ENCODE measurements at regions of chr6 and their contacts with region 1.

Region 1: DNA sequence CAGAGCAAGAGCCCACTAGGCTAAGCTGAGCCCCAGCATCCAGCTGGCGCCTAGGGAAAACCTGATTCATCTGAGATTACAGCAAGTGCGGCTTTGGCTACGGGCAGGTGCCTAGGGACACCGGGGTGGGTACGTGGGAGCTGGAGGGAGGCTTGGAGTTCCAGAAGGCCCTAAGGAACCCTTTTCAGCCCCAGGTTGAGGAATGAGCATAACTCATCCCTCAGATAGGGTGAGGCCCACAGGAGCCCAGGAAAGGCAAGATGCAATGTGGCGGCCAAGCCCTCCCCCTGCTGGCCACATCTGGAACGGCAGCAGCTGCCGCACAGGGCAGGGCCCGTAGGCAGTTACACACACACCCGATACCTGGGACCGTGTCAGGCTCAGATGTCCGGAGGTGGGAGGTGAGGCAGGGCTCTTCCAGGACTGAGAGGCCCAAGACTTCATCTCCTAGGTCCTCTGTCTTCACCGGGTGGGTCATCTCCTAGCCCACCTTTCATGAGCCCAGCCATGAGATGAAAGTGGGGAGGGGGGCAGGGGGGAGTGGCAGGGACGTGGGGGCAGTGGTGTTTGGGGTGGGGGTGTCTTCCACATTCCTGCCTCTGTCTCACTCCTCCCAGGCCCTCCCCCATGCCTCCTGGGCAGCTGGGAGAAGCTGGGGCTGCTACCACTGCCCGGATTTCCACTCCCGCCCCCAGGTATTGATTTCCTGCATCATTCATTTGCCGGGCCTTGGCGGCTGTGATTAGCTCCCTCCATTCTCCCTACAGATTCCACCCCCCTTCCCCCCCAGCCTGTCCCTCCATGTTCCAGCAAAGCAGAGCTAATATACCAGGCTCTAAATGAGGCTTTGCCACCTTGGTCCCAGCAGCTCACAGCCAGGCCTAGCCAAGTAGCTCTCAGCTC is 5.5 kb downstream of the MDGA1 start:
- DNase-seq: peak; percentile 74
- ATAC-seq: peak; percentile 88
- H3K4me3 Mint-ChIP-seq: no peak overlapping the region
- H3K27ac Mint-ChIP-seq: no peak overlapping the region
- H3K4me1 Mint-ChIP-seq: peaks cover 21% of the 10 kb centered on the region
- H3K27me3 Mint-ChIP-seq: peaks cover 18% of the 10 kb centered on the region
- CTCF ChIP-seq: peak; percentile 69

Region 2: DNA sequence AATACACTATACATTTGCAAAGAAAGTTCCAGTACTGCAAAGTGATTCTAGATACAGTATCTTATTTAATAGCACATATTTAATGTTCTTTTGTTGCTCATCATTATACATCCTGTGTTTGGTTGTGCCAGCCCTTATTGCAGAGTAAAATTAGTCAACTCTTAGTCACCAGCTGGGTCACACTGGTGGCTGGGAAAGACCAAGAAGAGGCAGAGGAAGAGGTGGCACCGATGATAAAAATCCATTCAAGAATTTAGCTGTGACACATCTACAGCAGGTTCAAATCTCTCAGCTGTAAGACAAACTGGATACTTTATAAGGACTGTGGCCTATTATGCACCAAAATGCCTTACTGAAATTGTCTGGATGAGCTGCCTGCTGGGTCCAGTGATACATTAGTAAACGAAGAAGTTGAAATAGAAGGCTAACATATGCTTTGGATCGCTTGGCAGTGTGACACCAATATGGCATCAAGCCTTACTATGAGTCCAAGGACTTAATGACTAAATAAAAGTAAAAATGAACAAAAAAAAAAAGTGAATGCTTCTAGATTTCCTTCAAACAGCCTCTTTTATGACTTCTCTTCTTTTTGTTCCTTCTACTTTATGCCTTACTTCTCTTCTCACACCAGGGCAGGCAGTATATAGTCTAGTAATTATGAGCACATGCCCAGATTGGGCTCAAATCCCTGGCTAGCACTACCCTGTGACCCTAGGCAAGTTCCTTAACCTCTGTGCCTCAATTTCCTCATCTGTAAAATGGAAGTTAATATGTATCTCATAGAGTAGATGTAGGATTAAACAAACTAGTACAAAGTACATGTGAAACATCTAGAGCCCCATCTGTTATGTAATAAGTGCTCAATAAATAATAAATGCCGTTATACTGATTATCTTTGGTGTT is 367.8 kb before region 1 on chr6:
- CTCF ChIA-PET with region 1: interaction called, 16 read pairs
- POLR2A ChIA-PET with region 1: no interaction called
- intact Hi-C with region 1: loop called (anchors 1 kb)
- DNase-seq: no peak
- ATAC-seq: no peak
- H3K4me3 Mint-ChIP-seq: no peak overlapping the region
- H3K27ac Mint-ChIP-seq: no peak overlapping the region
- H3K4me1 Mint-ChIP-seq: peaks cover 2% of the 10 kb centered on the region
- H3K27me3 Mint-ChIP-seq: no peaks in the 10 kb centered on the region
- CTCF ChIP-seq: no peak

Region 3: DNA sequence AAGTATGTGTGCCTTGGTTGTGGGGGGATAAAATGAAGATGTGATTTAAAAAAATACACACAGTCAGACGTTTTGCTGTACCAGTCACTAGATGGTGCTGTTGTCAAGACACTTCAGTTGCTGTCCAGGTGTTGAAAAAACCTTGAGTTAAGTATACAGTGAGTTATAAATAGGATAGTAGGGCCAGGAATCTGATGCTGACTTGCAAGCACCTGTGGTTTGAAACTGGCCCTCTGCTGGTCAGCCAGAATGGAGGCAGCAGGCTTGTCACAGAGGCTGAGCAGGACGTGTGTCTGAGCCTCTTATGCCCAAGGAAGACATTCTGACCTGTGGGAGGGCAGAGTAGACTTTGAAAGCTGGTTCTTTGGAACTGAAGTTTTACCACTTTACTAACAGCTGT is 310.6 kb before region 1 on chr6:
- CTCF ChIA-PET with region 1: no interaction called
- POLR2A ChIA-PET with region 1: no interaction called
- intact Hi-C with region 1: loop called (anchors 1 kb)
- DNase-seq: no peak
- ATAC-seq: peak; percentile 31
- H3K4me3 Mint-ChIP-seq: no peak overlapping the region
- H3K27ac Mint-ChIP-seq: no peak overlapping the region
- H3K4me1 Mint-ChIP-seq: peaks cover 22% of the 10 kb centered on the region
- H3K27me3 Mint-ChIP-seq: no peaks in the 10 kb centered on the region
- CTCF ChIP-seq: no peak

Region 4: GRCh38 chr6:37483917-37484785 is 208.0 kb before region 1 on chr6:
- CTCF ChIA-PET with region 1: interaction called, 11 read pairs
- POLR2A ChIA-PET with region 1: no interaction called
- intact Hi-C with region 1: loop called (anchors 1 kb)
- DNase-seq: peak; percentile 72
- ATAC-seq: peak; percentile 97
- H3K4me3 Mint-ChIP-seq: no peak overlapping the region
- H3K27ac Mint-ChIP-seq: no peak overlapping the region
- H3K4me1 Mint-ChIP-seq: peaks cover 3% of the 10 kb centered on the region
- H3K27me3 Mint-ChIP-seq: no peaks in the 10 kb centered on the region
- CTCF ChIP-seq: no peak

Region 5: GRCh38 chr6:37538107-37538506 is 154.0 kb before region 1 on chr6:
- CTCF ChIA-PET with region 1: interaction called, 42 read pairs
- POLR2A ChIA-PET with region 1: interaction called, 6 read pairs
- intact Hi-C with region 1: loop called (anchors 1 kb)
- DNase-seq: no peak
- ATAC-seq: peak; percentile 27
- H3K4me3 Mint-ChIP-seq: no peak overlapping the region
- H3K27ac Mint-ChIP-seq: peak overlapping the region; percentile 26
- H3K4me1 Mint-ChIP-seq: peaks cover 16% of the 10 kb centered on the region
- H3K27me3 Mint-ChIP-seq: peaks cover 20% of the 10 kb centered on the region
- CTCF ChIP-seq: no peak

Region 6: GRCh38 chr6:37630281-37630799 is 61.8 kb before region 1 on chr6:
- CTCF ChIA-PET with region 1: no interaction called
- POLR2A ChIA-PET with region 1: interaction called, 8 read pairs
- intact Hi-C with region 1: loop called (anchors 2 kb)
- DNase-seq: no peak
- ATAC-seq: no peak
- H3K4me3 Mint-ChIP-seq: no peak overlapping the region
- H3K27ac Mint-ChIP-seq: no peak overlapping the region
- H3K4me1 Mint-ChIP-seq: peaks cover 24% of the 10 kb centered on the region
- H3K27me3 Mint-ChIP-seq: peaks cover 4% of the 10 kb centered on the region
- CTCF ChIP-seq: no peak

Region 7: GRCh38 chr6:37653933-37654565 is 38.1 kb before region 1 on chr6:
- CTCF ChIA-PET with region 1: interaction called, 10 read pairs
- POLR2A ChIA-PET with region 1: no interaction called
- intact Hi-C with region 1: loop called (anchors 5 kb)
- DNase-seq: no peak
- ATAC-seq: peak; percentile 37
- H3K4me3 Mint-ChIP-seq: no peak overlapping the region
- H3K27ac Mint-ChIP-seq: no peak overlapping the region
- H3K4me1 Mint-ChIP-seq: peaks cover 5% of the 10 kb centered on the region
- H3K27me3 Mint-ChIP-seq: peaks cover 13% of the 10 kb centered on the region
- CTCF ChIP-seq: no peak

Measured in activated B cell treated with CpG ODN at 0.5 μM for 24 hours (primary cell).